HepG2 (cell line): ENCODE measurements at regions of chr4 and their contacts with region 1.

Region 1: GRCh38 chr4:13143222-13144070 is 340.7 kb downstream of the RAB28 start:
- DNase-seq: no peak
- ATAC-seq: no peak
- H3K4me3 ChIP-seq: no peak overlapping the region
- H3K27ac ChIP-seq: no peak overlapping the region
- H3K4me1 ChIP-seq: no peaks in the 10 kb centered on the region
- H3K27me3 ChIP-seq: no peaks in the 10 kb centered on the region
- CTCF ChIP-seq: no peak
- EP300 ChIP-seq: no peak
- POLR2A ChIP-seq: no peak
- RAD21 ChIP-seq: no peak

Region 2: GRCh38 chr4:12852338-12853307 is 290.8 kb before region 1 on chr4:
- CTCF ChIA-PET with region 1: no interaction called
- POLR2A ChIA-PET with region 1: no interaction called
- in situ Hi-C with region 1: no loop called
- intact Hi-C with region 1: no loop called
- DNase-seq: peak; percentile 76
- ATAC-seq: peak; percentile 98
- H3K4me3 ChIP-seq: peak overlapping the region in 2 of 3 experiments; percentile 11 to 17; a peak in 1 of 6 replicates
- H3K27ac ChIP-seq: peak overlapping the region; percentile 13
- H3K4me1 ChIP-seq: peaks cover 16% of the 10 kb centered on the region
- H3K27me3 ChIP-seq: no peaks in the 10 kb centered on the region
- CTCF ChIP-seq: peak; percentile 83
- EP300 ChIP-seq: no peak
- POLR2A ChIP-seq: no peak
- RAD21 ChIP-seq: peak; percentile 87

Region 3: GRCh38 chr4:13171292-13172057 is 28.0 kb after region 1 on chr4:
- CTCF ChIA-PET with region 1: no interaction called
- POLR2A ChIA-PET with region 1: no interaction called
- in situ Hi-C with region 1: no loop called
- intact Hi-C with region 1: loop called (anchors 2 kb)
- DNase-seq: no peak
- ATAC-seq: no peak
- H3K4me3 ChIP-seq: no peak overlapping the region
- H3K27ac ChIP-seq: no peak overlapping the region
- H3K4me1 ChIP-seq: no peaks in the 10 kb centered on the region
- H3K27me3 ChIP-seq: no peaks in the 10 kb centered on the region
- CTCF ChIP-seq: 0 out of 2 replicates have a peak, but pooled peaks have one; percentile 6
- EP300 ChIP-seq: no peak
- POLR2A ChIP-seq: no peak
- RAD21 ChIP-seq: no peak

Region 4: DNA sequence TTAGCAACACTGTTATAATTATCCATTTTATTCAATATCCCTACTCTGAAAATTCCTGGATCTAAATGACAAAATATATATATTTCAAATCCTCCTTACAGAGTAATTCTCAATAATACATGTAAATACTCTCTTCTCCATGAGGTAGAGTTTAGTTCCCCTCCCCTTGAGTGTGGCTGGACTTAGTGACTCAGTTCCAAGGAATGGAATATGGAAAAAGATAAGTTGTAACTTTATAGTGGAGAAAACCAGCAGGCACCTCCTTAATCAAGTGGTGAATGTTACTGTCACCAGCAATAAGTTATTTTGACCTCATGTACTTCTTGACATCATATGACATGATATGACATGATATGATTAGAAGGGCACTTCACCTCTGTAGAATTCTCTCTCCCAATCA is 38.7 kb after region 1 on chr4:
- CTCF ChIA-PET with region 1: no interaction called
- POLR2A ChIA-PET with region 1: no interaction called
- in situ Hi-C with region 1: no loop called
- intact Hi-C with region 1: no loop called
- DNase-seq: no peak
- ATAC-seq: no peak
- H3K4me3 ChIP-seq: no peak overlapping the region
- H3K27ac ChIP-seq: no peak overlapping the region
- H3K4me1 ChIP-seq: no peaks in the 10 kb centered on the region; the same call in 1 of the 2 replicates
- H3K27me3 ChIP-seq: no peaks in the 10 kb centered on the region
- CTCF ChIP-seq: no peak
- EP300 ChIP-seq: no peak
- POLR2A ChIP-seq: no peak
- RAD21 ChIP-seq: no peak

Region 5: GRCh38 chr4:13248621-13249298 is 105.3 kb after region 1 on chr4:
- CTCF ChIA-PET with region 1: no interaction called
- POLR2A ChIA-PET with region 1: no interaction called
- in situ Hi-C with region 1: no loop called
- intact Hi-C with region 1: no loop called
- DNase-seq: peak; percentile 13
- ATAC-seq: peak; percentile 37; the same call in 1 of the 3 replicates
- H3K4me3 ChIP-seq: no peak overlapping the region
- H3K27ac ChIP-seq: no peak overlapping the region
- H3K4me1 ChIP-seq: peaks cover 13% of the 10 kb centered on the region; the same call in 1 of the 2 replicates
- H3K27me3 ChIP-seq: no peaks in the 10 kb centered on the region
- CTCF ChIP-seq: peak; percentile 49
- EP300 ChIP-seq: no peak
- POLR2A ChIP-seq: no peak
- RAD21 ChIP-seq: no peak

Region 6: GRCh38 chr4:14008494-14008893 is 865.0 kb after region 1 on chr4:
- CTCF ChIA-PET with region 1: no interaction called
- POLR2A ChIA-PET with region 1: no interaction called
- in situ Hi-C with region 1: no loop called
- intact Hi-C with region 1: no loop called
- DNase-seq: no peak
- ATAC-seq: no peak
- H3K4me3 ChIP-seq: no peak overlapping the region
- H3K27ac ChIP-seq: no peak overlapping the region
- H3K4me1 ChIP-seq: no peaks in the 10 kb centered on the region
- H3K27me3 ChIP-seq: no peaks in the 10 kb centered on the region; a peak in 1 of 5 replicates
- CTCF ChIP-seq: no peak
- EP300 ChIP-seq: no peak
- POLR2A ChIP-seq: no peak
- RAD21 ChIP-seq: no peak